ENCODE measurements at regions of chr6 and their contacts with region 1.

Region 1: DNA sequence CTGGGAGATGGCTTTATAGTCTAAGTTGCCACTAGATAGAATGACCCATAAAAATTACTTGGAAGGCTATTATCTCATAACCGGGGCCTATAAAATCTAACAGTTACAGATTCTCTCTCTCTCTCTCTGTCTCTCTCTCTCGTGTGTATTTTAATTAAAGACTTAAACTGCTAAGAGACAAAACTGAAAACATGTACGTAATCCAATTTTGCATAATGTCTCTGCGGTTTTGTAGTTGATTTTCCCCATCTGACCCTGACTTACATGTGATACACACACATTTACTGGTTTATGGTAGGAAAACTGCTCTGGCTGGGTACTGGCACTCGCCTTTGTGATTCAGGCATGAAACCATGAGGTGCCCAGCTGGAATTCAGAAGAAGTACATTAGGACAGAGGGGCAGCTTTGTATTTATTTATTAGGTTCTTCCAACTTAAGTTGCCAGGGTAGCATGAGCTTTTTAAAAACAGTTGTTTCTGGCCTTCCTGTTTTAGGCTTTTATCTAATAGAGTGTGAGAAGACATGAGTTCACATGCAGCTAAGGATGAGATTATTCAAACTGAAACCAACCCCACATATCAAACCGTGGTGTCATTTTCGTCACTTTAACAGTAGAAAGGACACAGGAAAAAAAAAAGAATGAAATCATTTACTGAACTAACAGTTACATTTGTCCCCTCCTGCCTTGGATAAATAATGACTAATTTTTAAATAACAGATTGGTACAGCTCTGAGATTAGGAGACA is 182.5 kb downstream of the GMPR start:
- DNase-seq: peak; percentile 27
- ATAC-seq: peak; percentile 66
- H3K4me3 Mint-ChIP-seq: peak overlapping the region; percentile 62
- H3K27ac Mint-ChIP-seq: peak overlapping the region; percentile 98
- H3K4me1 Mint-ChIP-seq: peaks cover 47% of the 10 kb centered on the region
- H3K27me3 Mint-ChIP-seq: no peaks in the 10 kb centered on the region
- CTCF ChIP-seq: no peak

Region 2: DNA sequence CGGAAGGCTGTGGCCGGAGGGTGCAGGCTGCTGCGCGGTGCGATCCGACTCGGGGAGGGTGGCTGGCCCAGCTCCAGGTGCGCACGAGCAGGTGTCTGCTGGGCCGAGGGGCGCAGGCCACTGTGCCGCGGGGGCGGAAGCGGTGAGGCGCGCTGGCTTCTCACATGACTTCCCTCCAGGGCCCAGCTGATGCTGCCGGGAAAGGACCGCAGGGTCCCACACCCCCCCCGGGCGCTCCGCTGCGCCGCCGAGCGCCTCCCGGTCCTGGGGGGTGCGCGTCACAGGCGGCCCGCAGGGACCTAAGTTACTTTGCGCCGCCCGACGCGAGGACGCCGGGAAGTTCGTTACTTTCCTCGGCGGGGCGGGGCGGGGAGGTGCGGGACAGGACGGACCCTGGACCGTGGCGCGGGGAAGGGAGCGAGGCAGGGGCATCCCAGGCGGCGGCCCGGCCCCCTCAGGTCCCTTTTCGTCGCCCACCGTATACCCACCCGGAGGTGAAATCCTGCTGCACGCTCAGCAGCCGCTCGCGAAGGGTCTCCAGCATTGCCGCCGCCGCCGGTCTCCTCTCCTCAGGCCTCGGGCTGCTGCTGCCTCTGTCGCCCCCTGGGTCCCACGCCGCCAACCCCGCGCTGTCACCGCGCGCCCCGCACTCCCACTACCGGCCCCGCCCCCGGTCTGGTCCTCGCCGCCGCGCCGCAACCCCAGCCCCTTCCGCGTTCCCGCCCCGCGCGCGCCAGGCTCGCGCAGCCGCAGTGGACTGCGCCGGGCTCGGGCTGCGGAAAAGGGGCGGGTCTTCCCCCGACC is 758.4 kb before region 1 on chr6 and contains the start of gene DTNBP1:
- CTCF ChIA-PET with region 1: no interaction called
- POLR2A ChIA-PET with region 1: no interaction called
- intact Hi-C with region 1: loop called (anchors 1 kb)
- DNase-seq: peak; percentile 94
- ATAC-seq: peak; percentile 73
- H3K4me3 Mint-ChIP-seq: peak within 1 kb of the TSS; percentile 87
- H3K27ac Mint-ChIP-seq: peak within 1 kb of the TSS; percentile 89
- H3K4me1 Mint-ChIP-seq: peaks cover 49% of the 10 kb centered on the region
- H3K27me3 Mint-ChIP-seq: no peaks in the 10 kb centered on the region
- CTCF ChIP-seq: no peak
- total RNA-seq, gene DTNBP1: 50.3 and 51.6 TPM in 2 replicates

Region 3: GRCh38 chr6:16338577-16339262 is 82.2 kb before region 1 on chr6:
- CTCF ChIA-PET with region 1: no interaction called
- POLR2A ChIA-PET with region 1: no interaction called
- intact Hi-C with region 1: no loop called
- DNase-seq: no peak
- ATAC-seq: no peak
- H3K4me3 Mint-ChIP-seq: no peak overlapping the region
- H3K27ac Mint-ChIP-seq: no peak overlapping the region
- H3K4me1 Mint-ChIP-seq: peaks cover 5% of the 10 kb centered on the region
- H3K27me3 Mint-ChIP-seq: no peaks in the 10 kb centered on the region
- CTCF ChIP-seq: no peak

Region 4: GRCh38 chr6:16361861-16362260 is 59.0 kb before region 1 on chr6:
- CTCF ChIA-PET with region 1: no interaction called
- POLR2A ChIA-PET with region 1: no interaction called
- intact Hi-C with region 1: no loop called
- DNase-seq: no peak
- ATAC-seq: no peak
- H3K4me3 Mint-ChIP-seq: no peak overlapping the region
- H3K27ac Mint-ChIP-seq: no peak overlapping the region
- H3K4me1 Mint-ChIP-seq: peaks cover 2% of the 10 kb centered on the region
- H3K27me3 Mint-ChIP-seq: no peaks in the 10 kb centered on the region
- CTCF ChIP-seq: no peak

Region 5: GRCh38 chr6:16409531-16410441 is 11.1 kb before region 1 on chr6:
- CTCF ChIA-PET with region 1: interaction called, 8 read pairs
- POLR2A ChIA-PET with region 1: interaction called, 13 read pairs
- intact Hi-C with region 1: loop called (anchors 1 kb)
- DNase-seq: peak; percentile 32
- ATAC-seq: peak; percentile 60
- H3K4me3 Mint-ChIP-seq: peak overlapping the region; percentile 63
- H3K27ac Mint-ChIP-seq: peak overlapping the region; percentile 37
- H3K4me1 Mint-ChIP-seq: peaks cover 66% of the 10 kb centered on the region
- H3K27me3 Mint-ChIP-seq: no peaks in the 10 kb centered on the region
- CTCF ChIP-seq: no peak

Region 6: GRCh38 chr6:16471222-16471909 is 50.5 kb after region 1 on chr6:
- CTCF ChIA-PET with region 1: interaction called, 5 read pairs
- POLR2A ChIA-PET with region 1: interaction called, 49 read pairs
- intact Hi-C with region 1: loop called (anchors 1 kb)
- DNase-seq: peak; percentile 22
- ATAC-seq: peak; percentile 81
- H3K4me3 Mint-ChIP-seq: peak overlapping the region; percentile 28
- H3K27ac Mint-ChIP-seq: peak overlapping the region; percentile 88
- H3K4me1 Mint-ChIP-seq: peaks cover 69% of the 10 kb centered on the region
- H3K27me3 Mint-ChIP-seq: no peaks in the 10 kb centered on the region
- CTCF ChIP-seq: no peak

Region 7: DNA sequence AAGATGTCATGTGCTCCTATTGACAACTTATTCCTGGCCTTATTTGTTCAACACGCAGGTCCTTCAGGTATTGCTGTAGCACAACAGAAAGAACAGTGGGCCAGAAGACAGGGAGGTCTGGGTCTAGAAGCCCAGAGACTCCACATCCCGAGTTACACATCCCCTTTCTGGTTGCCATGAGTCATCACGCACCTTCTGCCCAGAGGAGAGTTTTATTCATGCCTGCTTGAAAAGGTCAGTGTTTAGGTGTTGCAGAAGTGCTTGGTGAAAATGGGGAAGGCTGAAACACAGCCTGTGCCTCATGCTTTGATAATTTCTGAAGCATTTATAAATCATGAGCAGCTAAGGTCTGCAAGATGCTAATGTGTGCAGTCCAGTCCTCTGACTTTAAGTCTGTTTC is 73.9 kb after region 1 on chr6:
- CTCF ChIA-PET with region 1: no interaction called
- POLR2A ChIA-PET with region 1: interaction called, 20 read pairs
- intact Hi-C with region 1: loop called (anchors 1 kb)
- DNase-seq: no peak
- ATAC-seq: peak; percentile 89
- H3K4me3 Mint-ChIP-seq: peak overlapping the region; percentile 17
- H3K27ac Mint-ChIP-seq: peak overlapping the region; percentile 60
- H3K4me1 Mint-ChIP-seq: peaks cover 39% of the 10 kb centered on the region
- H3K27me3 Mint-ChIP-seq: no peaks in the 10 kb centered on the region
- CTCF ChIP-seq: no peak

Region 8: DNA sequence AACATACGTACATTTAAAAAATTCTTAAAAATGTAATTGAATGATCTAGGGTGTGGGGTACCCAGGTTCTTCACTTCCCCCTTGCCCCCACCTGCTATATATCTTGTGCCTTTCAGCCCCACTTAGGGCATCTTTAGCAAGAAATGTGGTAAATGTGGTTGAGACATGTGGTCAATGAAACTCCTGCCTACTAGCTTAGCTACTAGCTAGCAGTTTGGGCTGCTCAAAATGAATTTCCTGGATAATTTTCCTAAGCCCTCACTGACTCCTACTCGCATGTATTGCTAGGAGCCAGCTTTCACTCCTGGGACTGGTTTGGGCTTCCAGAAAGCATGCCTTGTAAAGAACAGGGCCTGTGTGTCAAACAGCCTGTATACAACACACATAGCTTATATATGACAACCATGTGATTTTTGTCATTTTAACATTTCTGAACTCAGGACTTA is 83.1 kb after region 1 on chr6:
- CTCF ChIA-PET with region 1: interaction called, 7 read pairs
- POLR2A ChIA-PET with region 1: interaction called, 7 read pairs
- intact Hi-C with region 1: loop called (anchors 1 kb)
- DNase-seq: no peak
- ATAC-seq: peak; percentile 75
- H3K4me3 Mint-ChIP-seq: peak overlapping the region; percentile 46
- H3K27ac Mint-ChIP-seq: peak overlapping the region; percentile 80
- H3K4me1 Mint-ChIP-seq: peaks cover 42% of the 10 kb centered on the region
- H3K27me3 Mint-ChIP-seq: no peaks in the 10 kb centered on the region
- CTCF ChIP-seq: no peak

Region 9: DNA sequence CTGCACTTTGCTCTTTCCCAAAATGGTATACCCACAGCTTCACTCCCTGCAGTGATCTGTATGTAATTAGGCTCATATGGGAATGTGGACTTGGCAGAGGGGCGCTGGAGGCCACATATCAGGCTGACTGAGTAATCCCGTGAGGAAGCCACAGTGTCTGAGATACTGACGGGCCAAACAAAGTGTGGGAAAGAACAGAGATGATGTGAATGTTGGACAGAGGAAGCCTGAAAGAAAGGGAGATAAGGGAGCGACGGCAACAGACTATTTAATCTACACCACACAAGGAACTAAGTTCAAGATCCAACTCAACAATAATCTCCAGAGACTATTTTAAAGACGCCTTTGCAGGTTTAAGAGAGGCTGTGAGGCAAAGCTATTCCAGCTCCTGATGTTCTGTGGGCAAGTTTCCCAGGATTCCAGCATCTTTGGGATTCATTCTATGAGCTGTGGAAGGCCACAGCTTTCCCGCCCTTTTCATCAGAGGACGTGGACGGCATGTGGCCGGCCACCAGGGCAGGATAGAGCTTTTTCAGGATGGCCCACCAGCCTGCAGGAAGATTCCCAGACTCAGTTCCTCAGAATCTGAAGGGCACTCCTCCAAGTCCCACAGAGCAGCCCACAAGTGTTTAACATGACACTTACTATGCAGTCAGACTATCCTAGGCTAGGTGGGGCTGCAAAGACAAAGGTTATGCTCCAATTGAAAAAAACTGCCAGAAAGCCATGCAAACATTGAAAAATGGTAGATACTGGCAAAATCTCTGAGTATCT is 102.9 kb after region 1 on chr6:
- CTCF ChIA-PET with region 1: no interaction called
- POLR2A ChIA-PET with region 1: no interaction called
- intact Hi-C with region 1: no loop called
- DNase-seq: no peak
- ATAC-seq: no peak
- H3K4me3 Mint-ChIP-seq: no peak overlapping the region
- H3K27ac Mint-ChIP-seq: no peak overlapping the region
- H3K4me1 Mint-ChIP-seq: no peaks in the 10 kb centered on the region
- H3K27me3 Mint-ChIP-seq: no peaks in the 10 kb centered on the region
- CTCF ChIP-seq: no peak

Region 10: DNA sequence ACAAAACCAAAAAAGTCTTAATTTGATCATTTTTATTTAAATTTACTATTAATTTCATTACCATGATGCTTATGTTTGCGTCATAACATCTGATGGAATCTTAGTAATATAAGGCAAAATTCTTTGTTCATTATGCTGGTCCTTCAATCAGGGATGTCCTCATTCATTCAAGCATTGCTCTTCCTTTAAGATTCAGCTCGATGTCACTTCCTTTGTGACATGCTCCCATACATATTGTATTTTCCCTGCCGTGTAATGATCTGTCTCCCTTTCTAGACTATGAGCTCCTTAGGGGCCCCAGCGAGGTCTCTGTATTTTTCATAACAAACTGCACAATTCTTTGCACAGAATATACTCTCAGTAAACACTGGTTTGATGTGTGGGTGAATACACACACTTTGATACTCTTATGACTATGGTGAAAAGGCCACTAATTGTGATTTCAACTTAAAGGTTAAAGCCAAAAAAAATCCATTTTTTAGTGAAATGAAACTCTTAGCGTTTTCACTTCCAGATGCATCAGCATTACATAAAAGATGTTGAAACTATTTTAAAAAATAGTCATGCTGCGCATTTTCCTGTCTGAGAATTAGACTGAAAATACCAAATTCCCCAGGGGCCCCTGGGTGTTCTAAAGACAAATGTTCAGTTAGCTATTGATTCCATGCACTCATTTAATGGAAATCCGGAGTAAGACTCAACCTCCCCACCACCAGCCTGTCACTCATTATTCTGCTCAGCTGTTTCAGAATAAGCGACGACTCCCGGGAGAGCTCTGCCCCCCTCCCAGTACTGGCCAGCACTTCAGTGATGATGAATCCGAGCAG is 170.7 kb after region 1 on chr6:
- CTCF ChIA-PET with region 1: no interaction called
- POLR2A ChIA-PET with region 1: interaction called, 8 read pairs
- intact Hi-C with region 1: loop called (anchors 1 kb)
- DNase-seq: no peak
- ATAC-seq: peak; percentile 75
- H3K4me3 Mint-ChIP-seq: peak overlapping the region; percentile 72
- H3K27ac Mint-ChIP-seq: peak overlapping the region; percentile 83
- H3K4me1 Mint-ChIP-seq: peaks cover 52% of the 10 kb centered on the region
- H3K27me3 Mint-ChIP-seq: no peaks in the 10 kb centered on the region
- CTCF ChIP-seq: no peak

Measured in activated B cell treated with CpG ODN at 0.5 μM for 24 hours (primary cell).